ENCODE measurements at regions of chr2 and their contacts with region 1.

Region 1: GRCh38 chr2:16821692-16822091 is 156.1 kb upstream of the CYRIA start:
- DNase-seq: no peak
- H3K4me3 ChIP-seq: no peak overlapping the region
- H3K4me3 Mint-ChIP-seq: no peak overlapping the region
- H3K27ac ChIP-seq: no peak overlapping the region
- H3K27ac Mint-ChIP-seq: no peak overlapping the region
- H3K4me1 ChIP-seq: no peaks in the 10 kb centered on the region
- H3K4me1 Mint-ChIP-seq: peaks cover 4% of the 10 kb centered on the region
- H3K27me3 ChIP-seq: no peaks in the 10 kb centered on the region
- H3K27me3 Mint-ChIP-seq: no peaks in the 10 kb centered on the region
- CTCF ChIP-seq: no peak

Region 2: DNA sequence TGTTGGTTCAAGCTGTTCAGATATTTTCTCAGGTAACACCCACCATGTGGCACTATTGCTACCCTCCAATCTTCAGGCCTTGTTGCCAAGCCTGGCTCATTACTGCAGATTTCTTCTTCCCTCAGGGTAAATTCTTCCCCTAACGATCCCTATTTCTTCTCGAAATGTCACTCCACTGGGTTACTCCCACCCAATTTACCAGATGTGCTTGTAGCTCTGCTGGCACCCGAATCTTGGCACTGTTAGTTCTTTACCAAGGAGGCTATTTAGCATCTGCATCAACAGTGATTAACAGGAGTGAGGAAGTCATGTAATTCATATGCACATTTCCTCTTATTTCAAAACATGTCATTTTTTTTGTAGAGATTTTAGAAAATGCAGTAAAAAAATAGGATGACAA is 61.0 kb after region 1 on chr2:
- intact Hi-C with region 1: loop called in 1 of 2 experiments (anchors 10 kb)
- DNase-seq: peak in 1 of 3 donors; percentile 4
- H3K4me3 ChIP-seq: no peak overlapping the region
- H3K4me3 Mint-ChIP-seq: no peak overlapping the region
- H3K27ac ChIP-seq: no peak overlapping the region
- H3K27ac Mint-ChIP-seq: peak overlapping the region in 1 of 7 donors; percentile 8
- H3K4me1 ChIP-seq: no peaks in the 10 kb centered on the region
- H3K4me1 Mint-ChIP-seq: peaks cover 3% of the 10 kb centered on the region
- H3K27me3 ChIP-seq: no peaks in the 10 kb centered on the region
- H3K27me3 Mint-ChIP-seq: peaks cover 0 to 2% (median 0%) of the 10 kb centered on the region in 3 donors
- CTCF ChIP-seq: no peak